Ascending aorta (tissue), 2 donors: ENCODE measurements at regions of chr10 and their contacts with region 1.

Region 1: GRCh38 chr10:121765204-121765603 is 162.6 kb downstream of the ATE1 start:
- DNase-seq: no peak
- H3K4me3 ChIP-seq: no peak overlapping the region
- H3K27ac ChIP-seq: no peak overlapping the region
- H3K4me1 ChIP-seq: no peaks in the 10 kb centered on the region
- H3K27me3 ChIP-seq: no peaks in the 10 kb centered on the region
- CTCF ChIP-seq: no peak

Region 2: GRCh38 chr10:121734589-121735045 is 30.6 kb before region 1 on chr10:
- intact Hi-C with region 1: no loop called
- DNase-seq: no peak
- H3K4me3 ChIP-seq: no peak overlapping the region
- H3K27ac ChIP-seq: no peak overlapping the region
- H3K4me1 ChIP-seq: no peaks in the 10 kb centered on the region
- H3K27me3 ChIP-seq: no peaks in the 10 kb centered on the region
- CTCF ChIP-seq: peak; percentile 4 to 64 (median 53)

Region 3: GRCh38 chr10:122239578-122240257 is 474.5 kb after region 1 on chr10:
- intact Hi-C with region 1: loop called (anchors 5 kb)
- DNase-seq: no peak
- H3K4me3 ChIP-seq: no peak overlapping the region
- H3K27ac ChIP-seq: no peak overlapping the region
- H3K4me1 ChIP-seq: no peaks in the 10 kb centered on the region
- H3K27me3 ChIP-seq: no peaks in the 10 kb centered on the region
- CTCF ChIP-seq: no peak